ENCODE measurements at regions of chr16 and their contacts with region 1.

Region 1: GRCh38 chr16:7513429-7513828 is 180.8 kb downstream of the RBFOX1 start:
- DNase-seq: no peak
- H3K4me3 ChIP-seq: no peak overlapping the region
- H3K27ac ChIP-seq: no peak overlapping the region
- H3K4me1 ChIP-seq: no peaks in the 10 kb centered on the region
- H3K27me3 ChIP-seq: no peaks in the 10 kb centered on the region
- CTCF ChIP-seq: no peak
- EP300 ChIP-seq: no peak
- POLR2A ChIP-seq: no peak

Region 2: DNA sequence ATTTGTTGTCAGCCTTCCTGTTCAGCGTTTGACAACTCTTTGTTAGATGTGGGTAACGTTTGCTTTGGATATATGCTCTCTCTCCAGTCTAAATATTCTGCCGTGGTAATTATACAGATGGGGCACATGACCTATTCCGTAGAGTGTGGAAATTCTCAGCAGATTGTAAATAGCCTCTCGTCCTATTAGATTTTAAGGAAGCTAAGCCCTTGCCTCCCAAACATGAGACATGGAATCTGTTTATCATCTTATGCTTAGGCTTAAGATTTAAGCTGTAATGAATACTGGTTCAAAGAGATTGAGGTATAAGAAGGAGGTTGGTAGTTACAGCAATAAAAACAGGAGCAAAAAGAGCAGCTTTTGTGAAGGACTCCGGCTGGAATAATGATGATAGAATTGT is 93.3 kb before region 1 on chr16:
- intact Hi-C with region 1: no loop called
- DNase-seq: no peak
- H3K4me3 ChIP-seq: no peak overlapping the region
- H3K27ac ChIP-seq: no peak overlapping the region
- H3K4me1 ChIP-seq: no peaks in the 10 kb centered on the region
- H3K27me3 ChIP-seq: no peaks in the 10 kb centered on the region
- CTCF ChIP-seq: no peak
- EP300 ChIP-seq: no peak
- POLR2A ChIP-seq: no peak

Region 3: DNA sequence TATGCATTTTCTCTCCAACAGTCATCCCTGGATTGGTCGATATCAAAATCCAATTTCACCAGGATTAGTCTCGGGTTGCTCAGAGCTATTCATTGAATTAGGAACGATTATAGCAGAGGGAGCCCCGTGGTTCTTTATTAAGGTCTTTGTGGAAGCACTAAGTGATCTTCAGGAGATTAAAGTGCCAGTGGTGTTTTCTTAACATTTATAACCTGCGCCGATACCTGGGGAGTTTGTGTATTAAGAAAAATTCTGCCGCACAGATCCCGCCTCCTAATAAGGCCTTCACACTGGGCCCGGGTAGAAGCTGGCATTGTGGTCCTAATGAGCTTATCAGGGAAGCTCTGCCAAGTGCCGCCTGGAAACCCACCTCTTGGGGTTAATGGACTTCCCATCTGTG is 57.9 kb after region 1 on chr16:
- intact Hi-C with region 1: loop called in 1 of 4 experiments (anchors 10 kb)
- DNase-seq: no peak
- H3K4me3 ChIP-seq: no peak overlapping the region
- H3K27ac ChIP-seq: no peak overlapping the region
- H3K4me1 ChIP-seq: no peaks in the 10 kb centered on the region
- H3K27me3 ChIP-seq: no peaks in the 10 kb centered on the region
- CTCF ChIP-seq: no peak
- EP300 ChIP-seq: no peak
- POLR2A ChIP-seq: no peak